Activated CD4-positive, alpha-beta T cell treated with anti-CD3 and anti-CD28 coated beads for 36 hours (primary cell): ENCODE measurements at regions of chr16 and their contacts with region 1.

Region 1: GRCh38 chr16:89171463-89172170 is at the start of gene CDH15:
- DNase-seq: peak; percentile 99
- ATAC-seq: peak; percentile 97
- H3K4me3 Mint-ChIP-seq: peak within 1 kb of the TSS; percentile 43
- H3K27ac Mint-ChIP-seq: peak within 1 kb of the TSS; percentile 38
- H3K4me1 Mint-ChIP-seq: peaks cover 7% of the 10 kb centered on the region
- H3K27me3 Mint-ChIP-seq: peaks cover 3% of the 10 kb centered on the region
- total RNA-seq, gene CDH15: not detected

Region 2: DNA sequence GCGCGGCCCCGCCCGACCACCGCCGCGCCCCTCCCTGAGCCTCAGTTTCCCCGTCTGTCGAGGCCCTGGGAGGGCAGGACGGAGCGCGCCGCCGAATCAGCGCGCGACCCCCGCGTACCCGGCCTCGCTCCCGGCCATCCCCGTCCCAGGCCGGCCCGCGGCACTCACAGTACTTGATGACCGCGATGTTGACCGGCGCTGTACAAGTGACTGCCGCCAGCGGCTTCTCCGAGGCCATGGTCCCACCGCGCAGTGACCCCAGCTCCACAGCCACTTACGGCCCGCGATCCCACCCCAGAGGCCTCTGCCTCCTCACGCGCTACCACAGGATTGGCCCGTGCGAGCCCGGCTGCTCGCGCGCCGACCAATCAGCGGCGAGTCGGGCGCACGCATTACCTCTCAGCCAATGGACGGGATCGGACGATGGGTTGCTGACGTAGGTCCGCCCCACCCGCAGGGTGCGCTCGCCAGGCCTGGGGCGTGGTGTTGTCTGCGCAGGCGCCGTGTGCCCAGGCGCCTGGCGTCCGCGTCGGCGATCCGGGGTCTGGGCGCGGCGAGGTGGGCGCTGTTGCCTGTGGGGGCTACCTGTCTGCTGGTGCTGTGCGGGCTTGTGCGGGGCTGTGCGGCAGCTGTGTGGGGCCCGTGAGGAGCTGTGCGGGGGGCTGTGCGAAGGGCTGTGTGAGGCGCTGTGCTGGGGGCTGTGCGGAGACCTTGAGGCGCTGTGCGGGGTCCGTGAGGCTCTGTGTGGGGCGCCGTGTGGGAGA is 508.6 kb before region 1 on chr16 and contains the start of gene MVD:
- CTCF ChIA-PET with region 1: no interaction called
- POLR2A ChIA-PET with region 1: no interaction called
- intact Hi-C with region 1: loop called in 1 of 2 experiments (anchors 1 kb)
- DNase-seq: peak; percentile 98
- ATAC-seq: peak; percentile 99
- H3K4me3 Mint-ChIP-seq: peak within 1 kb of the TSS; percentile 92
- H3K27ac Mint-ChIP-seq: peak within 1 kb of the TSS; percentile 88
- H3K4me1 Mint-ChIP-seq: peaks cover 14% of the 10 kb centered on the region
- H3K27me3 Mint-ChIP-seq: no peaks in the 10 kb centered on the region
- total RNA-seq, gene MVD: 62.8 to 81.1 TPM

Region 3: DNA sequence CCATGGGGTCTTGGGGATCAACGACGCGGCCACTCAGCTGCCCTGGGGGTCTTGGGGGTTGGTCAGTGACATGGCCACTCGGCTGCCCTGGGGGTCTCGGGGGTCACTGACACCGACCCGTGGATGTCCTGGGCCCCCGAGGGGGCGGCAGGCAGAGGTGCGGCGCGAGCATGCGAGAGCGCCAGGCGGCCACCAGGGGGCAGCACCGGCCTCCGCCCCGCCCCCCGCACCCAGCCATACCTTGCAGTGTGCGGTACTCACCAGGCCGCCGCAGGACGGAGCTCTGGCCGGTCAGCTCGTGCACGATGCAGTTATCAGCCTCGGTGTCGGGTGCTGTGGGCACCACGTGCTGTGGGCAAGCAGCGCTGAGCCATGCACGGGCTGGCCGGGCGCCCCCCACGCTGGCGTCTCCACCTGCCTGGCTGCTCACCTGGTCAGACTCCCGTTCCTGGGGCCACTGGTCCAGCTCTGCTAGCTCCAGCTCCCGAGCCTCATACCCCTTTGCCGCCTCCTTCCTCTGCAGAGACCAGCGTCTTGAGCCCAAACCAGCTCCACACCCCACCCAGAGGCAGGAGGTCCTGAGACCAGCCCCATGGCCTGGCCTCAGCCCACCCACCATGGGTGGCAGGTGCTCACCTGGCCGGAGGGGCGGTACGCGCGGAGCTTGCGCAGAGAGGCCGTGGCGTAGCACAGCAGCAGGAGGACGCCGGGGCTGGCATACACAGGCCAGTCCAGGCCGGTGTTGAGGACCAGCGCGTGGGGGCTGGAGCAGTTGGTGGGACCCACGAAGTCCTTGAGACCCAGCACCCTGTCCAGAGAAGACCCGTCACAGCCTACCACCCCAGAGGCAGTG is 434.1 kb before region 1 on chr16:
- CTCF ChIA-PET with region 1: interaction called, 3 read pairs
- POLR2A ChIA-PET with region 1: no interaction called
- intact Hi-C with region 1: loop called (anchors 1 to 5 kb)
- DNase-seq: peak; percentile 89
- ATAC-seq: peak; percentile 91
- H3K4me3 Mint-ChIP-seq: no peak overlapping the region
- H3K27ac Mint-ChIP-seq: no peak overlapping the region
- H3K4me1 Mint-ChIP-seq: no peaks in the 10 kb centered on the region
- H3K27me3 Mint-ChIP-seq: no peaks in the 10 kb centered on the region

Region 4: GRCh38 chr16:88811769-88812512 is 359.7 kb before region 1 on chr16 and contains the start of gene APRT:
- CTCF ChIA-PET with region 1: interaction called, 4 read pairs
- POLR2A ChIA-PET with region 1: no interaction called
- intact Hi-C with region 1: loop called (anchors 1 kb)
- DNase-seq: peak; percentile 99
- ATAC-seq: peak; percentile 76
- H3K4me3 Mint-ChIP-seq: peak within 1 kb of the TSS; percentile 86
- H3K27ac Mint-ChIP-seq: peak within 1 kb of the TSS; percentile 94
- H3K4me1 Mint-ChIP-seq: peaks cover 22% of the 10 kb centered on the region
- H3K27me3 Mint-ChIP-seq: no peaks in the 10 kb centered on the region
- total RNA-seq, gene APRT: 105 to 179 TPM

Region 5: DNA sequence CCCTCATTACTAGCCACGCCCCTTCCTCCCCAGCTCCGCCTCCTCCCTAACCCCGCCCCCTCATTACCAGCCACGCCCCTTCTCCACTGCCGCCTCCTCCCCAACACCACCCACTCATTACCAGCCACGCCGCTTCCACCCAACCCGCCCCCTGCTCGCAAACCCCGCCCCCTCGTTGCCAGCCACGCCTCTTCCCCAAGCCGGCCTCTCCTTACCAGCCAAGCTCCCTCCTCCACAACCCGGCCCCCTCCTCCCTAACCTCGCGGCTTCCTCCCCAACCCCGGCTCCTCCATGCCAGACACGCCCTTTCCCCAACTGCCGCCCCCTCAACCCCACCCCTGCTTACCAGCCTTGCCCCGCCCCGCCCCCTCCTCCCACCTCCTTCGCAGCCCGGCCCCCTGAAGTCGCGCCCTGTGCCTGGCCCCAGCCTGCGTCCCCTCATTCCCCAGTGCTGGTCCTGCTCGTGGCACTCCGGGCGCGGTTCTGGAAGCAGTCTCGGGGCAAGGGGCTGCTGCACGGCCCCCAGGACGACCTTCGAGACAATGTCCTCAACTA is 21.5 kb after region 1 on chr16:
- CTCF ChIA-PET with region 1: interaction called, 5 read pairs
- POLR2A ChIA-PET with region 1: interaction called, 5 read pairs
- intact Hi-C with region 1: loop called (anchors 1 kb)
- DNase-seq: no peak
- ATAC-seq: peak; percentile 78
- H3K4me3 Mint-ChIP-seq: no peak overlapping the region
- H3K27ac Mint-ChIP-seq: no peak overlapping the region
- H3K4me1 Mint-ChIP-seq: no peaks in the 10 kb centered on the region
- H3K27me3 Mint-ChIP-seq: no peaks in the 10 kb centered on the region

Region 6: DNA sequence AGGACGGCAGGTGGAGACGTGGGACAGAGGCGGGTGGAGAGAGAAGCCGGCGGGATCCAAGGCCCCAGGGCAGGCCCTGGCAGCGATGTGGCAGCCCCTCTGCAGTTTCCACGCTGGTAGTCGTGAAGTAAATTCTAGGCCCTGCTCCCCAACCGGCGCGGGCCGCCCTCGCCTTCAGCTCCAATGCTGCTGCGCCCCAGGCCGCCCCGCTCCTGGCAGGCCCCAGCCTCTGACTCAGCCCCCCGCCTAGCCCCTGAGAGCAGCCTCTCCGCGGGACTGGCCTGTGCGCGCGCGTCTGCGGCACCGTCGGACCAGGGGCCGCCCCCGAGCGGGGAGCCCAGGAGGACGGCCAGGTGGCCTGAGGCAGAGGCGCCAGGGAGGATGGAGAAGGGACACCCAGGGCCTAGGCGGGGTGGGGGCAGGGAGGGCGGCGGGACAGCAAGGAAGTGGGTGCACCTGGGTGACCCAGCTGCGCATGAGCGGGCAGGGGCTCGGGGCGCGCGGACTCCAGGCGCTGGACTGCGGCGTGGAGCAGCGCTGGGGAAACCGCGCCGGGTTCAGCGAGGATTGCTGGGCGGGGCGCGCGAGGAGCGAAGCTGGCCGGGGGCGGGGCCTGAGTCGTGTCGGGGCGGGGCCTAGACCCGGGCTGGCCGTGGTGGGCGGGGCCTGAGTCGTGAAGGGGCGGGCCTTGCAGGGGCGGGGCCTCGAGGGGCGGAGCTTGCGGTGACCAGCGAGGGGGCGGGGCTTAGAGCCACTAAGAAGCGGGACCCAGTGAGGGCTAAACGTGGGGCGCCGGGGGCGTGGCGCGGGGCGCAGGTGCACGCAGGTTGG is 75.5 kb after region 1 on chr16:
- CTCF ChIA-PET with region 1: no interaction called
- POLR2A ChIA-PET with region 1: no interaction called
- intact Hi-C with region 1: loop called in 1 of 2 experiments (anchors 1 kb)
- DNase-seq: peak; percentile 99
- ATAC-seq: peak; percentile 93
- H3K4me3 Mint-ChIP-seq: peak overlapping the region; percentile 71
- H3K27ac Mint-ChIP-seq: no peak overlapping the region
- H3K4me1 Mint-ChIP-seq: peaks cover 15% of the 10 kb centered on the region
- H3K27me3 Mint-ChIP-seq: no peaks in the 10 kb centered on the region